Heart right ventricle (tissue), 16 donors: ENCODE measurements at regions of chr2 and their contacts with region 1.

Region 1: DNA sequence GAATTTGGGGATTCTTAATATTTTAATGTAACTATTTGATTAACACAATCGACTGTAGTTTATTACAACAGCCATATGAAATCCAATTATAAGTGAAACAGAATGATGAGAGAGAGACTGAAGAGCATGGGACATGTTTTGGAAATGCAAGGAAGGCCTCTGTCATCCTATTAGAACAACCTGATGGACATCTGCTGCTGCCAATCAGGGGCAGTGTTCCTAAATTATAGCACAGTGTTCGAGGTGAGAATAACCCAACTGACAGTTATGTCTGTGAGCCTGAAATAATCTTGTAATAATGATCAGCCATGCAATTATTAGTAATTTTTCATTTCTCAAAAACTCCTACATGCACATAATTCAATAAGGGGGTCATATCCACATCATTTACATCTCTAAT is 73.6 kb downstream of the CCDC141 start:
- DNase-seq: no peak
- ATAC-seq: no peak
- H3K4me3 ChIP-seq: no peak overlapping the region
- H3K27ac ChIP-seq: no peak overlapping the region
- H3K4me1 ChIP-seq: no peaks in the 10 kb centered on the region
- H3K27me3 ChIP-seq: no peaks in the 10 kb centered on the region
- CTCF ChIP-seq: no peak

Region 2: DNA sequence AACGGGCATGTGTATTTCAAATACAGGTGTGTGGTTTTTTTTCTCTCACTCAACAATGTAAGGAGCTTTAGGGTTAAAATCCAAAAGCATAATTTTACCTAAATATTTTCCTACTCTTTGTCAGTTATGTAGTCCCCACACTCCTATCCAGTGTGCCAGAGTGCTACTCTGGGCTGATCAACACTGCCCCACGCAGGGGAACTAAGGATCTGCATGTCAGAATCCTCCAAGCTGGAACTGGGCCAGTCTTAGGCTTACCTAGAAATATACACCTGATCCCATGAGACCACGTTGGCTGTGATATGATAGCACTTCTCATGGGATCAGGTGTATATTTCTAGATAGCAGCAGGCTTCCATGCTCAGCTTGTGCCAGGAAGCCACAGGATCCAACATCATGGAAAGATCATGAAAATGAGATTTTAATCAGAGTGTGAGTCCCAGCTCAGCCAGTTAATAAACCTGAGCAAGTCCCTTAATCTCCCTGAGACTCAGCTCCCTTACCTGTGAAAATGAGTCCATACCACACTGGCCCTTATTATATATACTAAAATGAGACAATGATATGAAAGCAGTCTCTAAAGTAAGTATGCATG is 43.9 kb after region 1 on chr2:
- intact Hi-C with region 1: loop called in 1 of 10 experiments (anchors 5 kb)
- DNase-seq: peak in 1 of 2 donors; percentile 20
- ATAC-seq: peak in 6 of 8 donors; percentile 46 to 77 (median 62)
- H3K4me3 ChIP-seq: no peak overlapping the region
- H3K27ac ChIP-seq: no peak overlapping the region
- H3K4me1 ChIP-seq: peaks cover 0 to 41% (median 5%) of the 10 kb centered on the region in 9 donors
- H3K27me3 ChIP-seq: no peaks in the 10 kb centered on the region
- CTCF ChIP-seq: peak in 8 of 9 donors; percentile 6 to 57 (median 50)